Heart right ventricle (tissue), 16 donors: ENCODE measurements at regions of chr3 and their contacts with region 1.

Region 1: GRCh38 chr3:115512565-115513415 is 110.5 kb upstream of the GAP43 start:
- DNase-seq: peak in 1 of 2 donors; percentile 21
- ATAC-seq: peak; percentile 54 to 77 (median 65)
- H3K4me3 ChIP-seq: peak overlapping the region; percentile 38 to 73 (median 55)
- H3K27ac ChIP-seq: peak overlapping the region in 8 of 10 donors; percentile 17 to 77 (median 66)
- H3K4me1 ChIP-seq: peaks cover 0 to 22% (median 16%) of the 10 kb centered on the region in 9 donors
- H3K27me3 ChIP-seq: no peaks in the 10 kb centered on the region
- CTCF ChIP-seq: no peak

Region 2: DNA sequence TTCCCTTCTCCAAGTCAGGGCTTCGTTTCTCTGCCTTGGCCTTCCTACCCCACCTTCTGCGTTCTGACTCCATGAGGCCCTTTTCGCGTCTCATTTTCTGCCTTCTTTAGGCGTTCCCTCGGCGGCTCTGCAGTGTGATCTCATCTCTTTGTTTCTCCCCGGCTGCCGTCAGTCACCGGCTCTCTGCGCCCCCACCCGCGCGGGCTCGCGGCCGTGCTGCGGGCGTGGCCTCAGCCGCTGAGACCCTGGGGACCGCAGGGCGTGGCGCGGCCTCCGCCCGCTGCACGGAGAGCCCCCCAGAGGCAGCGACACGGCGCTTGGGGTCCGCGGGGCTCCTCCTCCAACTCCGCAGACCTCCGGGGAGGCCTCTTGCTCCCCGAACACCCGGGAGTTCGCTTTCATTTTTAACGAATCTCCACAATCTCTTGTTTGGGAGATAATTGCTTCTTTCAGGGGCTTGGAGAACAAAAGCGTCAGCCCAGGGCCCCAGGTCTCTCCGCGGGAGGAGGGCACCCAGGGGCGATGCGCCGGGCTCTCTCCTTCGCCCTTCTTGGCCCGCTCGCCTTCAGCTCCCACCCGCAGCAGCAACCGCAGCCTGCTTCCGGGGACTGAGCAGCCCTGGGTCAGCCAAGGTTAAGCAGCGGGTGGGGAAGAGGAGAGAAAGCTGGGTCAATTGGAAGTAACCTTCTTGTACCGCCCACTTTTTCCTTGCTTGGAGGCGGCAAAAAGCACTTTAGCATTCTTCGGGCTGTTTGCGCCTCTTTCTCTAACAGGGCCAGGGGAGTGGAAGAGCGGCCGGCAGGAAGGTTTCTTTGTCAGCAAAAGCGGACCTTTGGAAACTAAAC is 145.8 kb after region 1 on chr3:
- intact Hi-C with region 1: loop called in 1 of 10 experiments (anchors 10 kb)
- DNase-seq: peak; percentile 85 to 87
- ATAC-seq: peak; percentile 95 to 99 (median 96)
- H3K4me3 ChIP-seq: peak overlapping the region; percentile 62 to 88 (median 75)
- H3K27ac ChIP-seq: peak overlapping the region; percentile 92 to 99 (median 97)
- H3K4me1 ChIP-seq: peaks cover 0 to 36% (median 25%) of the 10 kb centered on the region in 9 donors
- H3K27me3 ChIP-seq: no peaks in the 10 kb centered on the region
- CTCF ChIP-seq: no peak

Region 3: GRCh38 chr3:115671761-115672455 is 159.1 kb after region 1 on chr3:
- intact Hi-C with region 1: loop called in 1 of 10 experiments (anchors 10 kb)
- DNase-seq: no peak
- ATAC-seq: peak in 5 of 8 donors; percentile 41 to 65 (median 52)
- H3K4me3 ChIP-seq: no peak overlapping the region
- H3K27ac ChIP-seq: peak overlapping the region in 1 of 10 donors; percentile 8
- H3K4me1 ChIP-seq: peaks cover 0 to 29% (median 6%) of the 10 kb centered on the region in 9 donors
- H3K27me3 ChIP-seq: no peaks in the 10 kb centered on the region
- CTCF ChIP-seq: no peak

Region 4: DNA sequence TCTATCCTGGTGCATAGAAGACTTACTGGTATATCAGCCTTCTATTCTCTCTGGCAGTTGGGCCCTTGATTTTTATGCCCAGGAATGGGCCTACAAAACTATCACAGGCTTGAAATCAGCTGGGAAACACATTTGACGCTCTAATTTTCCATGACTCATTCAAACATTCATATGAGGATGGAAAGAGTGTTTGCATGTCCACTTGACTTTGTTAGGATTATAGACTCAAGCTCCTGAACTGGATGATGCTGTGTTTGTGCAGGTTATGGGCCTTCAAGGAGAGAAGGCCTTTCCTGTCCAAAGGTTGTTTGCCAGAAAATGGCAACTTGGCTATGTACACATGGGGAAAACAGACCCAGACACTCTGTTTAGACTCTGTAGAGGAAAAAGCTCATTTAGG is 330.4 kb after region 1 on chr3:
- intact Hi-C with region 1: no loop called
- DNase-seq: no peak
- ATAC-seq: no peak
- H3K4me3 ChIP-seq: no peak overlapping the region
- H3K27ac ChIP-seq: no peak overlapping the region
- H3K4me1 ChIP-seq: peaks cover 0 to 6% (median 0%) of the 10 kb centered on the region in 9 donors
- H3K27me3 ChIP-seq: no peaks in the 10 kb centered on the region
- CTCF ChIP-seq: no peak